ENCODE measurements at regions of chr11 and their contacts with region 1.

Region 1: GRCh38 chr11:47552566-47553416 is at the start of gene CELF1:
- DNase-seq: peak; percentile 96
- H3K4me3 Mint-ChIP-seq: peak within 1 kb of the TSS; percentile 95
- H3K27ac Mint-ChIP-seq: peak within 1 kb of the TSS; percentile 92
- H3K4me1 Mint-ChIP-seq: peaks cover 39% of the 10 kb centered on the region
- H3K27me3 Mint-ChIP-seq: no peaks in the 10 kb centered on the region
- total RNA-seq, gene CELF1: 103 to 115 TPM

Region 2: DNA sequence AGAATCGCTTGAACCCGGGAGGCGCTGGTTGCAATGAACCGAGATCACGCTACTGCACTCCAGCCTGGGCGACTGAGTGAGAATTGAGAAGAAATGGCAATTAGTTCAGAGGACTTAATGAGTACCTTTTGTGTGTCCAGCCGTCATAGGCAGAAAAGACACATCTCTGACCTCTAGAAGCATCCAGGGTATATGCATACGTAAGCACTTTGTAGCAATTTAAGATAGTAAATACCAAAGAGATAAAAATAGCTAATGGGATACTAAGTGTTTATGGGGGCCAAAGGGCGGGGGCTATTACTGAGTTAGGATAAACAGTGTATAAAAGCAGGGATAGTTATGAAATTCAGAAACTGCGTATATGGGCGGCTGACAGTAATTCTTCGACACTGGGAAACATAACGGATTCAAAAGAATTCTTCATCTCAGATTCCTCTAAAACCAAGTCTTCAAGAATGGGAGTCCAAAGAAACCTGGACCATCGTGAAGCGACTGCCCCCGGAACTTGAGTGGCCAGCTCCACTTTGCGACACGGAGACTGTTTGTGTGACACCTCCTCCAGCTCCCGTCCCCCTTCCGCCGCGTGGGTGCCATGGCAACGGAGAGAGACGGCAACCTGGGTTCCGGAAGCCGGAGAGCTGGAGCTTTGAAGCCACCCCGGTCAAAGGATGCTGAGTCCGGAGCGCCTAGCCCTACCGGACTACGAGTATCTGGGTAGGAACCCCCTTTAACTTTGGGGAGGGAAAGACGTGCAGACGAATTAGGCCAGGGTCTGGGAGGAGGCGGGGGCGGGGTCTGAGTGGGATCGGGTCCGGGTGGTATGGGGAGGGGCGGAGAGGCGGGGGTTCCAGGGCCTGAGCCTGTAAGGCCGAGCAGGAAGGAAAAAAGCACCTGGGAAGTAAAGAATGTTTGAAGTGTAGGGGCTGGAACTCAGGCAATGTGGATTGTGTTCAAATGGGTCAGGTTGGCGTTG is 616.4 kb before region 1 on chr11 and contains the start of gene CSTPP1:
- CTCF ChIA-PET with region 1: no interaction called
- POLR2A ChIA-PET with region 1: no interaction called
- intact Hi-C with region 1: loop called (anchors 10 kb)
- DNase-seq: peak; percentile 95
- H3K4me3 Mint-ChIP-seq: peak within 1 kb of the TSS; percentile 91
- H3K27ac Mint-ChIP-seq: peak within 1 kb of the TSS; percentile 83
- H3K4me1 Mint-ChIP-seq: peaks cover 16% of the 10 kb centered on the region
- H3K27me3 Mint-ChIP-seq: peaks cover 4% of the 10 kb centered on the region
- total RNA-seq, gene CSTPP1: 18.4 to 18.5 TPM

Region 3: GRCh38 chr11:47509077-47509536 is 43.7 kb before region 1 on chr11:
- CTCF ChIA-PET with region 1: interaction called, 20 read pairs
- POLR2A ChIA-PET with region 1: interaction called, 5 read pairs
- intact Hi-C with region 1: no loop called
- DNase-seq: peak; percentile 14
- H3K4me3 Mint-ChIP-seq: peak overlapping the region; percentile 49
- H3K27ac Mint-ChIP-seq: peak overlapping the region; percentile 94
- H3K4me1 Mint-ChIP-seq: peaks cover 80% of the 10 kb centered on the region
- H3K27me3 Mint-ChIP-seq: no peaks in the 10 kb centered on the region

Region 4: GRCh38 chr11:47538741-47539574 is 13.8 kb before region 1 on chr11:
- CTCF ChIA-PET with region 1: interaction called, 29 read pairs
- POLR2A ChIA-PET with region 1: interaction called, 12 read pairs
- intact Hi-C with region 1: loop called (anchors 1 kb)
- DNase-seq: no peak
- H3K4me3 Mint-ChIP-seq: no peak overlapping the region
- H3K27ac Mint-ChIP-seq: peak overlapping the region; percentile 87
- H3K4me1 Mint-ChIP-seq: peaks cover 65% of the 10 kb centered on the region
- H3K27me3 Mint-ChIP-seq: no peaks in the 10 kb centered on the region

Region 5: DNA sequence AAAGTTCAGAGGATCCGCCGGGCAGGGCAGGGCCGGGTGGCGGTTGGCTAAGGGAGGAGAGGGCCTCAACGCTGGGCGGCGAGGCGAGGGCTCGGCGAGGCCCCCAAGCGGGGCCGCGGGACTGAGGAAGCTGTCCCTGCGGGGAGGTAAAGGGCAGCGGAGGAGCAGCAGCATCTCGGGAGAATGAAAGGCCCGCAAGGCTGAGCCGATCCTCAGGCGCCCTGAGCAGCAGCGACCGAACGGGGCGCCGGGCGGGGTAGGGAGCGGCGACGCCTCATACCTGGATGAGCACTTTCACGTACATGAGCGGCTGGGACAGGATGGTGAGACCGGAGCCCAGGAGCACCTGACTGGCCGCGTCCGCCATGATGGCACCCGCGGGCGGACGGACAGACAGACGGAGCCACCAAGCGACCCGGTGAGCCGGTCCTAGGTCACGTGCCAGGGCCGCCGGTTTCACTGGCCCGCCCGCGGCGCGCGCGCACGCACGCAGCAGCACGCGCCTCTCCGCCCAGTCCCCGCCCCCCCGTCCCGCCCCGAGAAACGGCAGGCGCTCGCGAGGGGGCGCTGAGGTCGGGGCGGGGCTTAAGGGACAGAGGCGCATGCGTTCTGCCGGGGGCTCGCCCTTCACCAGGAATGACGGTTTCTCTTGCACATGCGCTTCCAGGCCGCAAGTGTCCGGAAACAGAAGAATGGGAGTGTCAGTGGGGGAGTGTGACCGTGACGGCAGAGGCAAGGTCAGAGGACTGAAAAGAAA is 89.5 kb after region 1 on chr11 and contains the start of gene MTCH2:
- CTCF ChIA-PET with region 1: no interaction called
- POLR2A ChIA-PET with region 1: no interaction called
- intact Hi-C with region 1: loop called (anchors 1 kb)
- DNase-seq: peak; percentile 98
- H3K4me3 Mint-ChIP-seq: peak within 1 kb of the TSS; percentile 94
- H3K27ac Mint-ChIP-seq: peak within 1 kb of the TSS; percentile 89
- H3K4me1 Mint-ChIP-seq: peaks cover 20% of the 10 kb centered on the region
- H3K27me3 Mint-ChIP-seq: no peaks in the 10 kb centered on the region
- total RNA-seq, gene MTCH2: 110 to 117 TPM

Measured in activated CD4-positive, alpha-beta memory T cell treated with anti-CD3 and anti-CD28 coated beads for 36 hours (primary cell).